ENCODE measurements at regions of chr19 and their contacts with region 1.

Region 1: DNA sequence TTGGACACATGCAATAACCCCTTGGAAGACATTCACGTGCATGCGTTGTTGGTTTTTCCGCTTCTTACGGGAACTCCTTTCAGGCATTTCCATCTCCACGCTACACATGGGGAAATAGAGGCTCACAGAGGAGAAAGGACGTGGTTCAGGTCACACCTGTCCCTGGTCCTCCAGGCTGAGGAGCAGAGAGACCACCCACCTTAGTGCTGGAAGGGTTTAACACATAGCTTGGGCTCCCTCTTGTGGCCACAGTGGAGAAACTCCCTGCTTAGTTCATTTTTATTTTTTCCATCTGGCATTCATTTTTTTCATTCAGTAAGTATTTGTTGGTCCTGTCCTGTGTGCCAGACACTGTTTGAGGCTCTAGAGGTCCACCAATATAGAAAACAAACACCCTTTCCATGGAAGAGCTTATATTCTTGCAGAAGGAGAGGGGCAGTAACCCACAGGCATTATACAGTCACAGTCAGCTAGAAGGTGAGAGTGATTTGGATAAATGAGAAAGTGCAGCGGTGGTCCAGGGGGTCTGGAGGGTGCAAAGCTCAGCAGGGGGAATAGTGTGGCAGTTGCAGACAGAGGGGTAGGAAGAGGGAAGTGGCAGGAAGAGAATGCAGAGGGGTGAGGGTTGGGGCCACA is 24.2 kb upstream of the TTYH1 start:
- DNase-seq: peak; percentile 89
- H3K4me3 Mint-ChIP-seq: peak overlapping the region; percentile 34
- H3K27ac Mint-ChIP-seq: no peak overlapping the region
- H3K4me1 Mint-ChIP-seq: peaks cover 28% of the 10 kb centered on the region
- H3K27me3 Mint-ChIP-seq: peaks cover 11% of the 10 kb centered on the region

Region 2: DNA sequence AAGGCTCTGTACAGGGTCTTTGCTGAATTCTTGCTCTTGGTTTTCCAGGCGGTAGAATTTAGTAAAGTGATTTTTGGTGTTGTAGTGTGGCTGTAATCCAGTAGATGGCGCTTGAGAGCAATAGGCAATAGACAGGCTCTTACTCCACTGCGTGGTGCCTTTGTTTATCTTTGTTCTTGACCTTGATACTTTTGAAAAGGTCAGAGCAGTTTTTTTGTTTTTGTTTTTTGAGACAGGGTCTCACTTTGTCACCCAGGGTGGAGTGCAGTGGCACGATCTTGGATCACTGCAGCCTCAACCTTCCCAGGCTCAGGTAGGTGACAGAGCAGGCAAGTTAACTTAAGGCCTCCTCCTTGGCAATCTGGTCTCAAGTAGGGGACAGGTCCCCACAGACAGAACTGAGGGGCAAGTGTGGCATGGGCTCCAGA is 65.9 kb before region 1 on chr19:
- intact Hi-C with region 1: loop called (anchors 1 kb)
- DNase-seq: peak; percentile 88
- H3K4me3 Mint-ChIP-seq: no peak overlapping the region
- H3K27ac Mint-ChIP-seq: no peak overlapping the region
- H3K4me1 Mint-ChIP-seq: peaks cover 15% of the 10 kb centered on the region
- H3K27me3 Mint-ChIP-seq: peaks cover 23% of the 10 kb centered on the region

Region 3: DNA sequence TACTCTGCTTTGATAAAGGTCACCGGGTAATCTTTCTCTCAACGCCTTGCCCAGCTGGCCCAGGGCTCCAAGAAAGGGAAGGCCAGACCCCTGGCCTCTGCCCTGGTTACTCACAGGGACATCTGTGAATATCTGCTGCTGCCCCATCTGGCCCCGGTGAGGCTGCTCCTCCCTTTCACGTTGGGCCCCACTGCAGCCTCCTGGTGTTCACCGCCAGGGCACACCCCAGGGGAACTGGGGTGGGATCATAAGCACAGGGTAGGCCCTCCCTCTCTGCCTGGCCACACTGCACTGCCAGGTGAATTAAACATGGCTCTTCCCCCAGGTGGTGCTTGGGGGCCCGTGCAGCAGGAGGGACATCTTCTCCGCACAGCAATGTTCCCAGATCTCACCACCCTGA is 39.0 kb before region 1 on chr19:
- intact Hi-C with region 1: loop called (anchors 5 kb)
- DNase-seq: no peak
- H3K4me3 Mint-ChIP-seq: no peak overlapping the region
- H3K27ac Mint-ChIP-seq: no peak overlapping the region
- H3K4me1 Mint-ChIP-seq: no peaks in the 10 kb centered on the region
- H3K27me3 Mint-ChIP-seq: peaks cover 27% of the 10 kb centered on the region

Region 4: GRCh38 chr19:54364775-54365257 is 26.2 kb before region 1 on chr19 and contains the start of gene LAIR1:
- intact Hi-C with region 1: loop called (anchors 2 kb)
- DNase-seq: peak; percentile 84
- H3K4me3 Mint-ChIP-seq: peak within 1 kb of the TSS; percentile 89
- H3K27ac Mint-ChIP-seq: peak within 1 kb of the TSS; percentile 87
- H3K4me1 Mint-ChIP-seq: peaks cover 56% of the 10 kb centered on the region
- H3K27me3 Mint-ChIP-seq: peaks cover 21% of the 10 kb centered on the region
- total RNA-seq, gene LAIR1: 5.9 and 7.7 TPM in 2 replicates

Region 5: DNA sequence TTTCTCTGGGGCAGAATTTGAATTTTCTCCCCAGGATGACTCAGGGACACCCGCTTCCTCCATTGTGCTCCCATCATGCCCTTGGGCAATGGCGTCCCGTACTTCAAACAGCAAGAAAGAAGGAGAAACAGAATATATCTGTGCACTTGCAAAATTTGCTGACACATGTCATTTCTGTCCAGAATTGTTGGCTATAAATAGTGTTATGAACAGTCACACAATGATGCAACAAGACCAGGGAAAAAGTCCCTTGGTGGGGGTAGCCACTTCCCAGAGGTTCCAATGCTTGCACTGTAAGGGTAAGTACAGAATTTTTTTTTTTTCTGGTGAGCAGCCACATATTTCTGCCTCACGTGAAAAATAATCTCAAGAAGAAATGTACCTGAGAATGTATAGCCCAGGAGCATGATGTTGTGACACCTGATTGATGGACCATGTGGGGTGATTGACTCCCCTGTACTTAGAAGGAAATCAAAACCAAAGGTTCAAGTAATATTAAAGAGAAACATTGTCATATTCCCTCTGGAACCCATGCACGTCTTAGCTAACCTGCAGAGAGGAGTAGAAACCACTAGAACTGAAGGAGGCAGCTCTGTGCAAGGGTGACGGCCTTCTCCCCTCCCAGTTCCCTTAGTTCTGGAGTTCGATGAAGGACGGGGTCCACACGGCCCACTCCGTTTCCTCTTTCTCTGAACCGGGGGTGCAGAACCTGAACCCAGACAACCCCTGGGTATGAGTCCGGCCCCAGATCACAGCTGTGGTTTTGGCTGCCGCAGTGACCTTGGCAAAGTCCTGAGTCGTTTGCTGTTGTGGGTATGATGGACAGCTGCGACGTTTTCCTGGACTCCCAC is 17.1 kb before region 1 on chr19:
- intact Hi-C with region 1: loop called (anchors 1 kb)
- DNase-seq: peak; percentile 58
- H3K4me3 Mint-ChIP-seq: peak overlapping the region; percentile 34
- H3K27ac Mint-ChIP-seq: no peak overlapping the region
- H3K4me1 Mint-ChIP-seq: peaks cover 71% of the 10 kb centered on the region
- H3K27me3 Mint-ChIP-seq: peaks cover 25% of the 10 kb centered on the region

Measured in activated CD4-positive, alpha-beta T cell treated with anti-CD3 and anti-CD28 coated beads, Interleukin-2, amount 10 ng/mL, durations not matched to agents 24 days and 14 days (primary cell).